ENCODE measurements at regions of chr1 and their contacts with region 1.

Region 1: DNA sequence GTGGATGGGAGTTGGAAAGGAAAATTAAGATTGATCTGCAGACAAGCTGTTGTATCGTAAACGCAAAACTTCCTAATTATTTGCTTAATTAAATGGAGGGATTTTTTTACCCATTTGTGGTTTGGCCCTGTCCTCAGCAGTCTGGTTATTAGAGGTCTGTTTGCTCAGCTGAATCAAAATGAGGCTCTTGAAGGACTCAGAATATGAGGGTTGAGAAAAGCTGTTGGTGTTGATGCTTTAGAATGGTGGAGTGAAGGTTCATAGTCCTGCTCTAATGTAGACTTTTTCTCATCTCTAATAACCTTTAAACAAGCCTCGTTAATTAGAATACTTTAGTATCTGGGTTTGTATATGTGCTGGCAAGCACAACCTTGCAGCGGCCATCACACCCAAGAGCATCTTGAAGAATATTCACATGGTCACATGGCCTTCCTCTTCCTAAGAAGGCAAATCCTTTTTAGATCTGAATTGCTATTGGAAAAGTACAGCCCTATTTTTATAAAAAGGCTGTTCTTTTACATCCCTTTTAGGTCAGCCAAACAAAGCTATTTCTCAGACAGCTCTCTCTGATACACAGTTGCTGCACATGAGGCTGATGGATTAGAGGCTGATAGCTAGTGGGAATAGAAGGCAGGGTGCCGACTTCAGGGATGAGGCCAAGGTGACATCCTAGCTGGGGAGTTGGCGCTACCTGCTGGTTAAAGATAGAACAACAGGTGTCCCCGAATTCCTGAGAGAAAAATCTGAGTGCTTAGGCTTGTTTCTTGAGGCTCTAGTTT is 53.8 kb downstream of the MACF1 start:
- DNase-seq: peak; percentile 61
- H3K4me3 Mint-ChIP-seq: no peak overlapping the region
- H3K27ac Mint-ChIP-seq: peak overlapping the region; percentile 11
- H3K4me1 Mint-ChIP-seq: peaks cover 28% of the 10 kb centered on the region
- H3K27me3 Mint-ChIP-seq: no peaks in the 10 kb centered on the region

Region 2: GRCh38 chr1:38891753-38892152 is 366.6 kb before region 1 on chr1:
- CTCF ChIA-PET with region 1: no interaction called
- POLR2A ChIA-PET with region 1: no interaction called
- DNase-seq: no peak
- H3K4me3 Mint-ChIP-seq: no peak overlapping the region
- H3K27ac Mint-ChIP-seq: no peak overlapping the region
- H3K4me1 Mint-ChIP-seq: no peaks in the 10 kb centered on the region
- H3K27me3 Mint-ChIP-seq: peaks cover 2% of the 10 kb centered on the region

Region 3: GRCh38 chr1:39183503-39184353 is 74.6 kb before region 1 on chr1:
- CTCF ChIA-PET with region 1: interaction called, 39 read pairs
- POLR2A ChIA-PET with region 1: interaction called, 4 read pairs
- DNase-seq: peak; percentile 84
- H3K4me3 Mint-ChIP-seq: no peak overlapping the region
- H3K27ac Mint-ChIP-seq: peak overlapping the region; percentile 88
- H3K4me1 Mint-ChIP-seq: peaks cover 50% of the 10 kb centered on the region
- H3K27me3 Mint-ChIP-seq: no peaks in the 10 kb centered on the region

Region 4: GRCh38 chr1:39189592-39190041 is 68.7 kb before region 1 on chr1:
- CTCF ChIA-PET with region 1: interaction called, 184 read pairs
- POLR2A ChIA-PET with region 1: interaction called, 38 read pairs
- DNase-seq: no peak
- H3K4me3 Mint-ChIP-seq: no peak overlapping the region
- H3K27ac Mint-ChIP-seq: peak overlapping the region; percentile 37
- H3K4me1 Mint-ChIP-seq: peaks cover 86% of the 10 kb centered on the region
- H3K27me3 Mint-ChIP-seq: no peaks in the 10 kb centered on the region

Region 5: GRCh38 chr1:39214998-39215873 is 43.1 kb before region 1 on chr1:
- CTCF ChIA-PET with region 1: interaction called, 17 read pairs
- POLR2A ChIA-PET with region 1: interaction called, 6 read pairs
- DNase-seq: peak; percentile 51
- H3K4me3 Mint-ChIP-seq: peak overlapping the region; percentile 93
- H3K27ac Mint-ChIP-seq: peak overlapping the region; percentile 85
- H3K4me1 Mint-ChIP-seq: peaks cover 58% of the 10 kb centered on the region
- H3K27me3 Mint-ChIP-seq: no peaks in the 10 kb centered on the region